Activated CD8-positive, alpha-beta T cell treated with anti-CD3 and anti-CD28 coated beads for 36 hours (primary cell): ENCODE measurements at regions of chr9 and their contacts with region 1.

Region 1: DNA sequence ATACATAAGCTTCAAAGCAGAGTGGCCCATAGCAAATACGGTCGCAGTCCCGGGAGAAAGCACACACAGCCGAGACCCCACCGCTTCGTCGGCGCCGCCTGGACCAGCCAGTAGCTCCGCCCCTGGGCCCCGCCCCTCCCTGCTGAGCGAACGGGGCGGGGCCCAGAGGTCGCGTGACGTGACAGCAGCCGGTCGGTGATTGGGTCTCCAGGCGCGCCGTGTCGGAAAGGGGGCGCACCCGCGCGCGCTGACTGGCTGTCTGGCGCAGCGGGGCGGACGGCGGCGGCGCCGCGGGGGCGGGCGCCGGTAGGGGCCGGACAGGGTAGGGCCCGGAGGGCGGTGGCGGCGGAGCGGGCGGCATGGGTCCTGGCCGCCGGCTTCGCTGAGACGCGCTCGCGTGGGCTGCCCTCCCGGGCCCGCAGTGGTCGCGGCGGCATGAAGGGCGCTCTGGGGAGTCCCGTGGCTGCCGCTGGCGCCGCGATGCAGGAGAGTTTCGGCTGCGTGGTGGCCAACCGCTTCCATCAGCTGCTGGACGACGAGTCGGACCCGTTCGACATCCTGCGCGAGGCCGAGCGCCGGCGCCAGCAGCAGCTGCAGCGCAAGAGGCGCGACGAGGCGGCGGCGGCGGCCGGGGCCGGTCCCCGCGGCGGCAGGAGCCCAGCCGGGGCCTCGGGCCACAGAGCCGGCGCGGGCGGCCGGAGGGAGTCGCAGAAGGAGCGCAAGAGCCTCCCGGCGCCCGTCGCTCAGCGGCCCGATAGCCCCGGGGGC is at the start of gene HABP4:
- DNase-seq: peak; percentile 97
- ATAC-seq: peak; percentile 97
- H3K4me3 Mint-ChIP-seq: peak within 1 kb of the TSS; percentile 87
- H3K27ac Mint-ChIP-seq: peak within 1 kb of the TSS; percentile 81
- H3K4me1 Mint-ChIP-seq: peaks cover 29% of the 10 kb centered on the region
- H3K27me3 Mint-ChIP-seq: peaks cover 11% of the 10 kb centered on the region
- CTCF ChIP-seq: no peak
- total RNA-seq, gene HABP4: 7.0 to 8.3 TPM

Region 2: DNA sequence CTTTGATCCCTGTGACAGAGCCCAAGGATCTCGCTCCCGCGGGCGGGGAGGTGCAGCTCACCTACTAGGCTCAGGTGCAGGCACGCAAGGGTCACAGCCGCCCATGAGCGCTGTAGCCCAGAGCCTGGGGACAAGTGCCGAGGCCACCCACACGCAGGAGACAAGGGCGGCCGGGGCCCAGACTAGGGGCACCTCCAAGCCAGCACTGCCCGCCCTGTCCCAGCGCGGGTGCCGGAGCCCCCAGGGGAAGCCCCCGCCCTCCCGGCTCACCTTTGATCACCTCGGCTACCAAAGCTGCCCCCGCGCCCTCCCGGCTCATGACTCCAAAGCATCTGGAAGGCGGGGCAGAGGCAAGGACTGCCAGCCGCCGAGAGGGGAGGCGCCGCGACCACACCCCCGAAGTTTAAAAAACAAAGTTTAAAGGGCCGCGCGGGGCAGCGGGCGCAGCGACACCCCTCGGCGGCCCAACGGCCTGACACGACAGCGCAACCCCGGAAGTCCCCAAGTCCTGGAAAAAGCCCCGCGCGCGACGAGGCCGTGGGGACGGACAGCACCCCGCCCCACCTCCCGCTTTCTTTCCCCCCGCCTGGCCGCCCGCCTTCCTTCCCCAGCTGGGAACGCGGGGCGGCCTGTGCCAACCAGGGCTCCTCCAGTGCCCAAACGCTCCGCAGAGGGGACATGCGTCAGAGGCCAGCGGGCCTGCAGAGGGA is 116.6 kb after region 1 on chr9:
- CTCF ChIA-PET with region 1: interaction called, 13 read pairs
- POLR2A ChIA-PET with region 1: no interaction called
- intact Hi-C with region 1: loop called (anchors 10 kb)
- DNase-seq: peak; percentile 84
- ATAC-seq: peak; percentile 88
- H3K4me3 Mint-ChIP-seq: peak overlapping the region; percentile 69
- H3K27ac Mint-ChIP-seq: peak overlapping the region; percentile 1
- H3K4me1 Mint-ChIP-seq: peaks cover 28% of the 10 kb centered on the region
- H3K27me3 Mint-ChIP-seq: peaks cover 4% of the 10 kb centered on the region
- CTCF ChIP-seq: peak; percentile 54

Region 3: GRCh38 chr9:96654443-96655197 is 204.6 kb after region 1 on chr9:
- CTCF ChIA-PET with region 1: interaction called, 3 read pairs
- POLR2A ChIA-PET with region 1: no interaction called
- intact Hi-C with region 1: loop called (anchors 5 kb)
- DNase-seq: peak; percentile 77
- ATAC-seq: peak; percentile 81
- H3K4me3 Mint-ChIP-seq: peak overlapping the region; percentile 79
- H3K27ac Mint-ChIP-seq: peak overlapping the region; percentile 84
- H3K4me1 Mint-ChIP-seq: peaks cover 12% of the 10 kb centered on the region
- H3K27me3 Mint-ChIP-seq: no peaks in the 10 kb centered on the region
- CTCF ChIP-seq: no peak